ENCODE measurements at regions of chr6 and their contacts with region 1.

Region 1: GRCh38 chr6:124123617-124124209 is 320.0 kb downstream of the NKAIN2 start:
- DNase-seq: no peak
- ATAC-seq: no peak
- H3K4me3 ChIP-seq: no peak overlapping the region
- H3K27ac ChIP-seq: no peak overlapping the region
- H3K4me1 ChIP-seq: no peaks in the 10 kb centered on the region
- H3K27me3 ChIP-seq: no peaks in the 10 kb centered on the region
- CTCF ChIP-seq: no peak

Region 2: DNA sequence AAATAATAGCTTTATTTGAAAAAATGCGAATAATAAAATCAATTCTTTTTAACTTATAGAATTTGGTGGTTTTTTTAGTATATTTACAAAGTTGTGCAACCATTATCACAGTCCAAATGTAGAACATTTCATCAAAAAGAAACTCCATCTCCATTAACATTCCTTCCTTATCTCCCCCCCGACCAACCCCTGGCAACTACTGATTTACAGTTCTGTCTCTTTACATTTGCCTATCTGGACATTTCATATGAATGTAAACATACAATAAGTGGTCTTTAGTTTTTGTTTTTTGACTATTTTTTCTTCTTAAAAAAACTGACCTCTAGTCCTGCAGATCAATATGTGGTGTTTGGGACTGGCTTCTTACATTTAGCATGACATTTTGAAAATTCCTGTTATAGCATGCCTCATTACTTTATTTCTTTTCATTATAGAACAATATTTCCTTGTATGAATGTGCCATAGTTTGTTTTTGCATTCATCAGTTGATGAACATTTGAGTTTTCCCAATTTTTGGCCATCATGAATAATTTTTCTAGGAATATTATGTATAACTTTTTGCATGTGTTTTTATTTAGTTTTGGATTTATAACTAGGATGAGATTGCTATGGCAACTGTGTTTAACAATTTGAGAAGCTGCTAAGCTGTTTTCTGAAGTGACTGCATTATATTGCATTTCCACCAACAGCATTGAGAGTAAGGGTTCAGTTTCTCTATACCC is 24.7 kb after region 1 on chr6:
- intact Hi-C with region 1: loop called in 1 of 10 experiments (anchors 1 kb)
- DNase-seq: no peak
- ATAC-seq: no peak
- H3K4me3 ChIP-seq: no peak overlapping the region
- H3K27ac ChIP-seq: no peak overlapping the region
- H3K4me1 ChIP-seq: no peaks in the 10 kb centered on the region
- H3K27me3 ChIP-seq: no peaks in the 10 kb centered on the region
- CTCF ChIP-seq: no peak